Activated CD8-positive, alpha-beta memory T cell treated with anti-CD3 and anti-CD28 coated beads, Interleukin-2, amount 10 ng/mL, durations not matched to agents 7 days and 5 days (primary cell): ENCODE measurements at regions of chr13 and their contacts with region 1.

Region 1: GRCh38 chr13:99436686-99437416 is 64.4 kb upstream of the TM9SF2 start:
- DNase-seq: peak; percentile 97
- ATAC-seq: peak; percentile 70
- H3K4me3 Mint-ChIP-seq: peak overlapping the region; percentile 12
- H3K27ac Mint-ChIP-seq: peak overlapping the region; percentile 81
- H3K4me1 Mint-ChIP-seq: peaks cover 68% of the 10 kb centered on the region
- H3K27me3 Mint-ChIP-seq: peaks cover 17% of the 10 kb centered on the region

Region 2: DNA sequence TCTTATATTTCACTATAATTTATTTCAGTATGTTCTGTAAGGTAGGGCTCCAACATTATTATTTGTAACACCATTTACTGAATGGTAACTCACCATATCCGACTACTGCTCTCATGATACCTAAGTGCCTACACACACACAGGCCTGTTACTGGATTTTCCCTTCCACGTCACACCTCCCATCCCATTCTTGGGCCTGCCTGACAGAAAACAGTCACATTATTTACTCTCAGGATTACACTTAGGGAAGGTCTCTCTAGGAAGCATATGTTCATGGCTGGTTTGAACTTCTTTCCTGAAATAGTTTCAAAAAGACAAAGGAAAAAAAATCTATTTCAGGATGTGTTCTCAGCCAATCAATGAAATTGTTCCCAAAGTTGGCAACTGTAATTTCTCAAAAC is 356.7 kb before region 1 on chr13:
- CTCF ChIA-PET with region 1: no interaction called
- DNase-seq: no peak
- ATAC-seq: no peak
- H3K4me3 Mint-ChIP-seq: no peak overlapping the region
- H3K27ac Mint-ChIP-seq: no peak overlapping the region
- H3K4me1 Mint-ChIP-seq: peaks cover 50% of the 10 kb centered on the region
- H3K27me3 Mint-ChIP-seq: no peaks in the 10 kb centered on the region

Region 3: GRCh38 chr13:99200432-99201167 is 236.3 kb before region 1 on chr13 and contains the start of gene UBAC2:
- CTCF ChIA-PET with region 1: interaction called, 26 read pairs
- DNase-seq: peak; percentile 97
- ATAC-seq: peak; percentile 86
- H3K4me3 Mint-ChIP-seq: peak within 1 kb of the TSS; percentile 91
- H3K27ac Mint-ChIP-seq: peak within 1 kb of the TSS; percentile 92
- H3K4me1 Mint-ChIP-seq: peaks cover 54% of the 10 kb centered on the region
- H3K27me3 Mint-ChIP-seq: no peaks in the 10 kb centered on the region
- total RNA-seq, gene UBAC2: 52.8 to 60.8 TPM

Region 4: GRCh38 chr13:99269627-99270241 is 167.1 kb before region 1 on chr13:
- CTCF ChIA-PET with region 1: interaction called, 280 read pairs
- DNase-seq: no peak
- ATAC-seq: peak; percentile 70
- H3K4me3 Mint-ChIP-seq: no peak overlapping the region
- H3K27ac Mint-ChIP-seq: no peak overlapping the region
- H3K4me1 Mint-ChIP-seq: peaks cover 62% of the 10 kb centered on the region
- H3K27me3 Mint-ChIP-seq: no peaks in the 10 kb centered on the region

Region 5: GRCh38 chr13:99374994-99375737 is 61.7 kb before region 1 on chr13:
- CTCF ChIA-PET with region 1: interaction called, 14 read pairs
- DNase-seq: no peak
- ATAC-seq: peak; percentile 29
- H3K4me3 Mint-ChIP-seq: peak overlapping the region; percentile 38
- H3K27ac Mint-ChIP-seq: peak overlapping the region; percentile 70
- H3K4me1 Mint-ChIP-seq: peaks cover 72% of the 10 kb centered on the region
- H3K27me3 Mint-ChIP-seq: no peaks in the 10 kb centered on the region

Region 6: DNA sequence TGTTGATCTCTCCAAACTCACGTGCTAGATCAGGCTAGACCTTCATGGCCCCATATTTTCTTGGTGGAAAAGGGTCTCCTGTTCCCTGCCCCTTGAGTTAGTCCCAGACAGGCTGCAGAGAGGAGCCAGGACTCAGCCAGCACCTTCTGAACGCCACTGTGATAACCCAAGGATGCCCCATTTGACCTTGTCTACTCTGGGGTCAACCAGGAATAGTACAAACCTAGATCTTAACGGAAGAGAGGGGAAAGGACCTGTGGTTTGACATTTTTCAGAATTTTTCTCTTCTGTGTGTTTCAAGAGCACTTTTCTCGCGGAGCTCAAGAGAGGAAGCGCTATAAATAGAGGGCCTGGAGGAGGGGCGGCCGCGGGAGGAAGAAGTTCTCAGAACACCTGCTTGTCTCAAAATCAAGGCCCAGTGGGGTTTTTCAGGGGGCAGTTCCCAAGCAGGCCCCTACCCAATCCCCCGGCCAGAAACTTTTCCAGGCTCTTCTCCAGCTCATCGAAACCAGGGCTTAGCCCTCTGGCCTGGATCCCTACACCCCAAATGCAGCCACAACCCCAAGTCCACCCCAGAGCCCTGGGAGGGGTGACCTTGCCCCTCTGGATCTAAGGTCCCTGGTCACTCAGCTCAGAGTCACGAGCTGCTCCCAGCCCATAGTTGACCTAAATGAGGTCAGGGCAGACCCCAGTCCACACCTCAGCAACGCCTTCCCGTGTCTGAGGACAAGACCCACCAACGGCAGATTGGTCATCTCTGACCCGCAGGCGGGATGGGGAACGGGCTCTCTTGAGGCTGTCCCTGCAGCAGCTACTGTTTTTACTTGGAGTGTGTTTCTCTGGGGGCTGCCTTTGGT is 11.1 kb before region 1 on chr13:
- CTCF ChIA-PET with region 1: interaction called, 58 read pairs
- DNase-seq: peak; percentile 72
- ATAC-seq: peak; percentile 67
- H3K4me3 Mint-ChIP-seq: peak overlapping the region; percentile 34
- H3K27ac Mint-ChIP-seq: peak overlapping the region; percentile 81
- H3K4me1 Mint-ChIP-seq: peaks cover 42% of the 10 kb centered on the region
- H3K27me3 Mint-ChIP-seq: peaks cover 2% of the 10 kb centered on the region

Region 7: GRCh38 chr13:99501184-99501847 is 64.5 kb after region 1 on chr13 and contains the start of gene TM9SF2:
- CTCF ChIA-PET with region 1: interaction called, 39 read pairs
- DNase-seq: peak; percentile 98
- ATAC-seq: peak; percentile 67
- H3K4me3 Mint-ChIP-seq: peak within 1 kb of the TSS; percentile 97
- H3K27ac Mint-ChIP-seq: peak within 1 kb of the TSS; percentile 96
- H3K4me1 Mint-ChIP-seq: peaks cover 70% of the 10 kb centered on the region
- H3K27me3 Mint-ChIP-seq: no peaks in the 10 kb centered on the region
- total RNA-seq, gene TM9SF2: 67.9 to 79.4 TPM